CD14-positive monocyte (primary cell): ENCODE measurements at regions of chr2 and their contacts with region 1.

Region 1: GRCh38 chr2:235746257-235747084 is 252.6 kb downstream of the AGAP1 start:
- DNase-seq: peak; percentile 3 to 35 (median 9)
- H3K4me3 ChIP-seq: no peak overlapping the region
- H3K4me3 Mint-ChIP-seq: no peak overlapping the region
- H3K27ac ChIP-seq: no peak overlapping the region
- H3K27ac Mint-ChIP-seq: no peak overlapping the region
- H3K4me1 ChIP-seq: no peaks in the 10 kb centered on the region
- H3K4me1 Mint-ChIP-seq: no peaks in the 10 kb centered on the region
- H3K27me3 ChIP-seq: no peaks in the 10 kb centered on the region
- H3K27me3 Mint-ChIP-seq: peaks cover 5 to 8% (median 8%) of the 10 kb centered on the region in 3 donors
- CTCF ChIP-seq: peak; percentile 61

Region 2: GRCh38 chr2:235595422-235596010 is 151.0 kb before region 1 on chr2:
- intact Hi-C with region 1: loop called in 1 of 2 experiments (anchors 5 kb)
- DNase-seq: no peak
- H3K4me3 ChIP-seq: no peak overlapping the region
- H3K4me3 Mint-ChIP-seq: no peak overlapping the region
- H3K27ac ChIP-seq: no peak overlapping the region
- H3K27ac Mint-ChIP-seq: no peak overlapping the region
- H3K4me1 ChIP-seq: no peaks in the 10 kb centered on the region
- H3K4me1 Mint-ChIP-seq: no peaks in the 10 kb centered on the region
- H3K27me3 ChIP-seq: no peaks in the 10 kb centered on the region
- H3K27me3 Mint-ChIP-seq: peaks cover under 1 to 4% (median 1%) of the 10 kb centered on the region in 3 donors
- CTCF ChIP-seq: peak; percentile 58